GM13977 (cell line): ENCODE measurements at regions of chr3 and their contacts with region 1.

Region 1: DNA sequence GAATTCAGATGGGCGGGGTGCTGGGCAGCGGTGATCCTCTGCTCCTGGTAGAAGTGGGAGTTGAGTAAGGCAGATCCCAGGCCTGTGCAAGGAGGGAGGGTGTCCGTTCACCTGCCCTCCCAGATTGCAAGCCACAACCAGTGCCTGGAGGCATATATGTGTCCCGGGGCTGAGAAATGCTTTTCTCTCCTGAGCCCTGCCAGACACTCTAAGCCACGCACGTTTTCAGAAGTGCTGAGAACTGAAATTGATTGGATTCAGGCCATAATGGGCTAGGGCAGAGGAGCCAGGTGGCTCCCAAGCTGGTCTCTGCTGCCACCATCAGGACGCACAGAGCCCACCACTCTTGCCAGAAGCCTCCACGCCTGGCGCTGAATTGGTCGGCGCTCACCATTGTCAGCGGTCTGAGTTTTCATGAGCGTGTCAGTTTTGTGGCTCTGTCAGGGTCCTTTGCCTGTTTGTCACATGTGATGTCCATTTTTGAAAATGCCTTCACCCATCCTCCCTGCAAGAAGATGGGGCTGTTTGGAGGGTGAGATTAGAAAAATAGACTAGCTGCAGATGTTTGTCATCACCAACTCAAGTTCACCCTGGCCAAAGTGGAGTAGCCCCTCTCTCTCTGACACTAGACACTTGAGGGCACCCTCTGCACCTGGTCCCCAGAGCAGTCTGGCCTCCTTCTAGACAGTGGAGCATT is 15.4 kb upstream of the BFSP2 start:
- DNase-seq: peak; percentile 69
- CTCF ChIP-seq: peak; percentile 57

Region 2: DNA sequence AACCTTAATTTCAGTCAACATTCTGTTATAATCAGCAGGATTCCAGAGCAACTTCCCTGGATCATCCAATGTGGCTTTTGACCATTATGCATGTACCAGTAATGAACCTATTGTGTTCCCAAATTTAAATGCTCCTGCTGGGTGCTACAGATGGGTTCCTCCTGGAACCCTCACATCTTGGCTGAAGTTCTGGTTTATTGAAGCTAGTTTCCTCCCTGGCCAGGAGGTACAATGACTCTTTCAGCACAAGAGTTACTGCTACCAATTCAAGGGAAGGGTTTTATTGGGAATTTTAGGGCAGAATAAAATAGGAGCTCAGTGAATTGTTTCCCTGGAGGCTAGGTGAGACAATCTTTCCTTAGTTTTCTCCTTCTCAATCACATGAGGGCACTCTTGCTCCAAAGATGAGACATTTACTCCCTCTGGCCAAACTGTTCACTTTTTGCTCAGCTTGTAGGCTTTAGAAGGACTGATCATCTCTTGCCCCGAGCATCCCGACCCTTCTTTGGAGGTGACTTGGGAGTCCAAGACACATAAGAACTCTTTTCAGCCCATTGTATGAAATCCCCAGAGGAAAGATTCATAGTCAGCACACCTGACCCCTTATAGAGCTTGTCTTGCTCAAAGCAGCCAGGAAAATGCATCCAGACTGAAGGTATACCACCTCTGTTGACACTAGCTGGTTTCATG is 653.4 kb before region 1 on chr3:
- in situ Hi-C with region 1: loop called (anchors 25 kb)
- DNase-seq: peak; percentile 11
- CTCF ChIP-seq: peak; percentile 54

Region 3: GRCh38 chr3:133040696-133041523 is 343.6 kb before region 1 on chr3:
- in situ Hi-C with region 1: loop called (anchors 25 kb)
- DNase-seq: peak; percentile 74
- CTCF ChIP-seq: peak; percentile 71

Region 4: DNA sequence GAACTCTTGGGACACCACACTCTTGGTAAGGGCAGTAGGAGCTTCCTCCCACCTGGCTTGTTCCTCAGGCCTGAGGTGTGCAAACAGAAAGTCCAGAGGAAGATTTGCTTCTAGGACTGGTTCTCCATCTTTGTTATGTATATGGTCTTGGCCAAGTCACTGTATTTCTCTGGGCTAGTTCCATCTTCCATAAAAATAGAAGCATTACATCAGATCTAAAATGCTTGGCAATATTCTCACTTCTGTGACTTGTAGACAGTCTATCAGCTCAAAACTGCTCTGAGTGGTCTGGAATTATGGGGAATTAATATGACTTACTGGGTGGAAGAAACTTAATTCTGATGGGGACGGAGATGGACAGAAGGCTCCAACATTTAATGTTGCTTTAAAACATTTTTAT is 291.1 kb before region 1 on chr3:
- in situ Hi-C with region 1: no loop called
- DNase-seq: no peak
- CTCF ChIP-seq: no peak

Region 5: GRCh38 chr3:133246119-133246518 is 138.4 kb before region 1 on chr3:
- in situ Hi-C with region 1: no loop called
- DNase-seq: no peak
- CTCF ChIP-seq: no peak

Region 6: GRCh38 chr3:133506215-133506901 is 121.9 kb after region 1 on chr3:
- in situ Hi-C with region 1: no loop called
- DNase-seq: peak; percentile 67
- CTCF ChIP-seq: no peak

Region 7: DNA sequence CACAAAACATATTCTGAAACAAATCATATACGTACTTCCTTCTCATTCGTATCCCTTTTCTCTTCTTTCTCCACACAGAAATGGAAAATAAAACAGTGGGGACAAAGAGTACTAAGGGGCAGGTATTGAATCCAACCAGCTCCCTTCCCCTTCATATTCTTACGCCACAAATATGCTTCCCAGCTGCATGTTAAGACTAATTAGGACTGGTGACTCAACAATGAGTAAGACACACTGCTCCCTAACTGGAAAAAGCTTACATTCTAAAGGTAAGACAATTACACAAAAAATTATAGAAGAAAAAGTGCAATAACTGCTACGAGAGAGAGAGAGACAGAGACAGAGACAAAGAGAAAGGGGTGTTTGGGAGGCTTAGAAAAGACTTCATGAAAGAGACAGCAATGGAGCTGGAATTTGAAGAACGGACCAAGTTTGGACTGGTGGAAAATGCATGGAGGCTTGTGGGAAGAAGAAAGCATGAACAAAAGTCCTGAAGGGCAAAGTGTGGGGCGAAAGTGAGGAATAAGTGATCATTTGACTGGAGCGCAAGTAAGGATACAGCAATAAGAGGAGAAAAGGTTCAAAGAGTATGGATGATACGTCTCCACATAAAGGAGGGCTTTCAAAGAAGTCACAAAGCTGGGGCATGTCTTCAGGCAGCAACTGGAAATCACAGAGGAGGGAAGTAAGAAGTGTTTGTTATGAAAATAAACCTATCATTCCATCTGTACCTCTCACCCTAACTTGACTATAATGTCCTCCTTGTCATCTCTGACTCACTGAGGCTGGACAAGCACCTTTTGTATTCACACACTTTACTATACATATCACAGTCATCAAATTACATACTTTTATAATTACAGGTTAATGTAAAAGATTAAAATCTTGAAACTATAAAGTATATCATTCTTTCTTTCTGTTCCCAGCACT is 817.0 kb after region 1 on chr3:
- in situ Hi-C with region 1: no loop called
- DNase-seq: no peak
- CTCF ChIP-seq: no peak